ENCODE measurements at regions of chr3 and their contacts with region 1.

Region 1: GRCh38 chr3:151290673-151291072 is 12.3 kb upstream of the P2RY14 start:
- DNase-seq: no peak
- H3K4me3 ChIP-seq: no peak overlapping the region
- H3K27ac ChIP-seq: no peak overlapping the region
- H3K4me1 ChIP-seq: no peaks in the 10 kb centered on the region
- H3K27me3 ChIP-seq: no peaks in the 10 kb centered on the region
- CTCF ChIP-seq: peak; percentile 48 to 57

Region 2: GRCh38 chr3:151327571-151328198 is 37.0 kb after region 1 on chr3:
- CTCF ChIA-PET with region 1: no interaction called
- dilution Hi-C with region 1: no loop called
- in situ Hi-C with region 1: loop called in 1 of 2 experiments (anchors 5 kb)
- intact Hi-C with region 1: loop called (anchors 1 kb)
- DNase-seq: no peak
- H3K4me3 ChIP-seq: no peak overlapping the region
- H3K27ac ChIP-seq: no peak overlapping the region
- H3K4me1 ChIP-seq: peaks cover 21% of the 10 kb centered on the region
- H3K27me3 ChIP-seq: no peaks in the 10 kb centered on the region
- CTCF ChIP-seq: peak; percentile 55 to 61

Region 3: DNA sequence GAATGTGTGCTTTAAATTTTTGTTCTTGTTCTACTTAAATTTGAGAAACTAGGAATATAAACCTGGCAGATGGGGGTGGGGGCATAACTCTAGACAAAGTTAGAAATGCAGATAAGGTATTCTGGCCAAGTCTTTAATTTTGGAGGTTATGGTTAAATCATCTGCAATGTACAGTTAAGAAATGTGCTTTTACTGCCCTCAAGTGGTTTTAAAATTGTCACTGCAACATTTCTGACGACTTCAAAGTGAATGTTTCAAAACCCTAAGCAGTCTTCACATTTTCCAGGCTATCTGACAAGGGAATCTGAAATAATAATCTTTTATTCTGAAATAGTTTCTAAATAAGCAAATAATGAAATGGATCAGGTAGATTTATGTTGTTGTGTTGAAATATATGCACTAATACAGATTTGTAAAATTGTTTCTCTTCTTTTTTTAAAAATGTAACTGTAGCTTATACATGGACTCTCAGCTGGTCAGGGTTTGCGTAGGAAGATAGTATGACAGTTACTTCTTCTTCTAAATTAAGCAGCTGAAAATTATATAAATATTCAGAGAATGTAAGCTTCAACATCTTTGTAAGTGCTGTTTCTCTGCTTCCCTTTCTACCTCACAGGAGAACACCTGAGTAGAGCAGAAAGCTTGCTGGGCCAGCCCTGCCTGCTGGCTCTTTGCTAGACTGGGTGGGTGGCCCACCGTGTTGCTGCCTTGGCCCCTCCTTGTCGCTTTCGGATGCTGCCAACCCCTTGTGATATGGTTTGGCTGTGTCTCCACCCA is 627.8 kb after region 1 on chr3:
- CTCF ChIA-PET with region 1: no interaction called
- dilution Hi-C with region 1: no loop called
- in situ Hi-C with region 1: no loop called
- intact Hi-C with region 1: loop called (anchors 2 kb)
- DNase-seq: peak; percentile 26
- H3K4me3 ChIP-seq: no peak overlapping the region
- H3K27ac ChIP-seq: no peak overlapping the region
- H3K4me1 ChIP-seq: no peaks in the 10 kb centered on the region
- H3K27me3 ChIP-seq: no peaks in the 10 kb centered on the region
- CTCF ChIP-seq: peak; percentile 63 to 67

Measured in mammary epithelial cell (primary cell).